ENCODE measurements at regions of chr13 and their contacts with region 1.

Region 1: GRCh38 chr13:30545320-30545719 is 72.4 kb upstream of the USPL1 start:
- DNase-seq: no peak
- H3K4me3 ChIP-seq: no peak overlapping the region
- H3K27ac ChIP-seq: no peak overlapping the region
- H3K4me1 ChIP-seq: no peaks in the 10 kb centered on the region
- H3K27me3 ChIP-seq: no peaks in the 10 kb centered on the region
- CTCF ChIP-seq: no peak
- EP300 ChIP-seq: no peak
- POLR2A ChIP-seq: no peak

Region 2: DNA sequence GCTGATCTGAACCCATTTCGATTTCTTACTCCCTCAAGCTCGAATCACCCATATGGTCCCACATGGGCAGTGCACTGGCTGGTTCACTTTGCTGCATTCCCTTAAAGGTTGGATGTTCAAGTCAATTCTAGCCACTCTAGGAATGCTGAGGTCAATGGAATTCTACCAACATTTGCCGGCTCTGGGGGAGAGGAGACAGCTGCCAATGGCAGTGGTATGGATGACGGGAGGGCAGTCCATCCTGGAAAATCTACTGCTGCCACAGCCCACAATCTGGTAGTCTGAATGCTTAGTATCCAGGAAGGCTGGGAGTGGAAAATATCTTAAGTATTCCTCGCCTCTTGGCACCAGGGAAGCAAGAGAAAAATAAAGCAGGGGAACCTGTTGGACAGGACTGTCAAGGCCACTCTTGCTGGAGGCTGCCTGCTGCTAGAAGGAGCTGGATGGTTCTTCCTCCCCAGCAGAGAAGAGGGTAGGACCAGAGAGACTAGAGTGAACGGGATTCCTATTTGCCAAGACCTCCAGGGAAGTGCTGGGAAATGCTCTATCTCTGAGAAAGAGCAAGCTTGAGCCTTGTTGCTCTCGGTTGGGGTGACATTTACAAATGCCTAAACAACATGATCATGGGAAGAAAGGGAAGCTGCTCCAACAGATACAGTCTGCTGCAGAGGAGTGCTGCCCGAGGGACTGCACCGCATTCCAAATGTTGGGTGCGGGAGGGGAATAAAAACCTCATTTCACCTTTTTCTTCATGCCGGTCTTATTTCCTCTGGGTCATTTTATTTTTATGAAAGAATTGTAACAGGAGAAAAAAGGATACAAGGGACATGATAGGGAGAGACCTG is 58.9 kb before region 1 on chr13:
- intact Hi-C with region 1: loop called (anchors 10 kb)
- DNase-seq: no peak
- H3K4me3 ChIP-seq: no peak overlapping the region
- H3K27ac ChIP-seq: no peak overlapping the region
- H3K4me1 ChIP-seq: peaks cover 0 to 6% (median 0%) of the 10 kb centered on the region in 4 donors
- H3K27me3 ChIP-seq: no peaks in the 10 kb centered on the region
- CTCF ChIP-seq: no peak
- EP300 ChIP-seq: no peak
- POLR2A ChIP-seq: no peak

Region 3: GRCh38 chr13:30607908-30608307 is 62.6 kb after region 1 on chr13:
- intact Hi-C with region 1: no loop called
- DNase-seq: no peak
- H3K4me3 ChIP-seq: no peak overlapping the region
- H3K27ac ChIP-seq: no peak overlapping the region
- H3K4me1 ChIP-seq: peaks cover 0 to 12% (median 7%) of the 10 kb centered on the region in 4 donors
- H3K27me3 ChIP-seq: no peaks in the 10 kb centered on the region
- CTCF ChIP-seq: no peak
- EP300 ChIP-seq: no peak
- POLR2A ChIP-seq: no peak